CD14-positive monocyte (primary cell): ENCODE measurements at regions of chr9 and their contacts with region 1.

Region 1: GRCh38 chr9:101311758-101312420 is 72.9 kb downstream of the BAAT start:
- DNase-seq: peak; percentile 12 to 62 (median 44)
- H3K4me3 ChIP-seq: no peak overlapping the region
- H3K4me3 Mint-ChIP-seq: no peak overlapping the region
- H3K27ac ChIP-seq: no peak overlapping the region
- H3K27ac Mint-ChIP-seq: no peak overlapping the region
- H3K4me1 ChIP-seq: no peaks in the 10 kb centered on the region
- H3K4me1 Mint-ChIP-seq: no peaks in the 10 kb centered on the region
- H3K27me3 ChIP-seq: peaks cover 0 to 6% of the 10 kb centered on the region in 2 donors
- H3K27me3 Mint-ChIP-seq: peaks cover 1 to 11% (median 3%) of the 10 kb centered on the region in 3 donors
- CTCF ChIP-seq: peak; percentile 79

Region 2: DNA sequence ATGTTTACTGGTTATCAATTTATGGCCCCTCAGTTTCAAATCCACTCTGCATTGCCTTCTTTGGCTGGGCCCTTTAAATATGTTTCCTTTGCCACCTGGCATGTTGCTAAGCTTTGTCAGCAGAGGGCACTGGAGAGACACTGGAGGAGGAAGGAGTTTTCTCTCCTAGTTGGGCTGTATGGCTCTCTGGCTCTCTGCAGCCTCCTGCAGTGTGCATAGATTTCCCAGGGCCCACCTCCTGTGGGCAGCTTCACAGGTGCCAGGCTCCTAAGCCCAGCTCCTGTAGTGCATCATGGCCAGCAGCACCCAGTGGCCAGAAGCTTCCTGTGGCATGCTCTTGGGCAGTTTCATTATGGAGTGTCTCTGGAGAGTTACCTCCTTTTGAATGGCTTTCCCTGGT is 710.7 kb before region 1 on chr9:
- intact Hi-C with region 1: loop called in 1 of 2 experiments (anchors 10 kb)
- DNase-seq: peak; percentile 3 to 13 (median 12)
- H3K4me3 ChIP-seq: no peak overlapping the region
- H3K4me3 Mint-ChIP-seq: no peak overlapping the region
- H3K27ac ChIP-seq: no peak overlapping the region
- H3K27ac Mint-ChIP-seq: no peak overlapping the region
- H3K4me1 ChIP-seq: peaks cover 10% of the 10 kb centered on the region in 2 donors
- H3K4me1 Mint-ChIP-seq: peaks cover 12% of the 10 kb centered on the region
- H3K27me3 ChIP-seq: peaks cover 5 to 9% of the 10 kb centered on the region in 2 donors
- H3K27me3 Mint-ChIP-seq: peaks cover 19 to 25% (median 24%) of the 10 kb centered on the region in 3 donors
- CTCF ChIP-seq: peak; percentile 48

Region 3: GRCh38 chr9:100714372-100715099 is 597.4 kb before region 1 on chr9:
- intact Hi-C with region 1: loop called (anchors 5 kb)
- DNase-seq: peak in 2 of 3 donors; percentile 24 to 31
- H3K4me3 ChIP-seq: no peak overlapping the region
- H3K4me3 Mint-ChIP-seq: no peak overlapping the region
- H3K27ac ChIP-seq: no peak overlapping the region
- H3K27ac Mint-ChIP-seq: no peak overlapping the region
- H3K4me1 ChIP-seq: no peaks in the 10 kb centered on the region
- H3K4me1 Mint-ChIP-seq: no peaks in the 10 kb centered on the region
- H3K27me3 ChIP-seq: no peaks in the 10 kb centered on the region
- H3K27me3 Mint-ChIP-seq: peaks cover 0 to 2% (median under 1%) of the 10 kb centered on the region in 3 donors
- CTCF ChIP-seq: peak; percentile 85

Region 4: GRCh38 chr9:101235105-101235866 is 76.6 kb before region 1 on chr9:
- intact Hi-C with region 1: no loop called
- DNase-seq: no peak
- H3K4me3 ChIP-seq: no peak overlapping the region
- H3K4me3 Mint-ChIP-seq: no peak overlapping the region
- H3K27ac ChIP-seq: no peak overlapping the region
- H3K27ac Mint-ChIP-seq: no peak overlapping the region
- H3K4me1 ChIP-seq: no peaks in the 10 kb centered on the region
- H3K4me1 Mint-ChIP-seq: no peaks in the 10 kb centered on the region
- H3K27me3 ChIP-seq: no peaks in the 10 kb centered on the region
- H3K27me3 Mint-ChIP-seq: peaks cover 0 to 3% (median 2%) of the 10 kb centered on the region in 3 donors
- CTCF ChIP-seq: no peak

Region 5: GRCh38 chr9:101398068-101398929 is 86.4 kb after region 1 on chr9 and contains the starts of genes MRPL50 and ZNF189:
- intact Hi-C with region 1: no loop called
- DNase-seq: peak; percentile 98 to 99 (median 98)
- H3K4me3 ChIP-seq: peak within 1 kb of the TSS; percentile 87 to 92 (median 91)
- H3K4me3 Mint-ChIP-seq: peak within 1 kb of the TSS; percentile 90 to 99
- H3K27ac ChIP-seq: peak within 1 kb of the TSS; percentile 79 to 98
- H3K27ac Mint-ChIP-seq: peak within 1 kb of the TSS; percentile 96 to 100 (median 99)
- H3K4me1 ChIP-seq: peaks cover 21 to 34% of the 10 kb centered on the region in 2 donors
- H3K4me1 Mint-ChIP-seq: peaks cover 33% of the 10 kb centered on the region
- H3K27me3 ChIP-seq: no peaks in the 10 kb centered on the region
- H3K27me3 Mint-ChIP-seq: no peaks in the 10 kb centered on the region
- CTCF ChIP-seq: no peak
- polyA plus RNA-seq, gene MRPL50: 1.9 to 4.9 (median 4.8) TPM
- polyA plus RNA-seq, gene ZNF189: 0.72 to 1.8 (median 1.2) TPM

Region 6: DNA sequence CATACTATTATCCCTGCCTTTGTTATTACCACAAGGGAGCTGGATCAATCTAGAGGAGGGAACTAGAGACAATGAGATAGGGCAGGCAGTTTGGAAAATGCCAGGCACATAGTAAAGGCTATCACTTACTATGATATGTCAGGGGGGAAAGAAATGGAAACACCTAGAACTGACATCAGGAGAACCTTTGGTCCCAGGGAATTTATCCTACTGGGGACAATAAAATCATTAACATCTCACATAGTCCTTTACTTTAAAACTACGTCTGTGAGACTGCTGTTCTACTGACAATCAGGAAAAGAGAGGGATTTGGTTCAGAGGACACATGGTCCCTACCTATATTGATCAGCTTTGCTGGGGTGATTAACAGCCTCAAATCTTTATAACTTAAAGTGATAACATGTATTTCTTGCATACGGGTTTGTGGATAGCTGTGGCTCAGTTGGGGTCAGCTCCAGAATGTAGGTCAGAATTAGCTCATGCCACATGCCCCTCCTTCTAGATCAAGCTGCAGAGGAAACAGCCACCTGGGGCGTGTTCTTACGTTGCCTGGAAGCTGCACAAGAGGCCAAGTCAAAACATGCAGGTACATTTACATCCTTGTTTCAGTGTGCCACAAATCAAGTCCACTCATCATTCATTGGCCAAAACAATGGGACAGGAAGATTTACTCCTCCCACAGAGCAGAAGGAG is 167.6 kb after region 1 on chr9:
- intact Hi-C with region 1: no loop called
- DNase-seq: no peak
- H3K4me3 ChIP-seq: no peak overlapping the region
- H3K4me3 Mint-ChIP-seq: no peak overlapping the region
- H3K27ac ChIP-seq: no peak overlapping the region
- H3K27ac Mint-ChIP-seq: no peak overlapping the region
- H3K4me1 ChIP-seq: no peaks in the 10 kb centered on the region
- H3K4me1 Mint-ChIP-seq: no peaks in the 10 kb centered on the region
- H3K27me3 ChIP-seq: peaks cover 7 to 8% of the 10 kb centered on the region in 2 donors
- H3K27me3 Mint-ChIP-seq: peaks cover 7 to 11% (median 8%) of the 10 kb centered on the region in 3 donors
- CTCF ChIP-seq: no peak